Heart right ventricle (tissue), 16 donors: ENCODE measurements at regions of chr16 and their contacts with region 1.

Region 1: DNA sequence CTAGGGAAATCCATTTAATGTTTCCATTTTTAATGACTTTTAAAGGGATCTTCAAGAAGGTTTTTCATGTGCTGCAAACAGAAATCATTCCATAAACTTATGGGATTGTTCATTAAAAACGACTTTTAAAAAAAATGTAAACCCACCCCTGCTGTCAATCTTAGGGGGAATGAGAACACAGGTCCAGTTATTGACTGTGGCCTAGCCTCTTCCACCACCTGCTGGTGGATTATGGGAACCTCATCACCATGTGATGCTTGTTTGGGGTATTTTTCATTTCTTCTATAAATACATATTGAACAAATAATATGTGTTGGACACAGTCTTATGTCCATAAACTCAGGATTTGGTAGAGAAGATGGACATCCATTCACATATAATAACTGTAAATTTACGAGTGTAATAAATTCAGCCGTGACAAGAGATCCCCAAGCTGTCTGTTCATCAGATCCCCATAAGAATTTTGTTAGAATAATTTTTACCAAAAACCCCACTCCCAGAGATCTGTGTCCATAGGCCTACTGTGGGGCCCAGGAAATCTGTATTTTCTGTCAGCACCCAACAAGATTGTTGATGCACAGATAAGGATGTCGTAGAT is 42.0 kb upstream of the TMC5 start:
- DNase-seq: peak; percentile 15 to 44
- ATAC-seq: peak in 5 of 8 donors; percentile 58 to 76 (median 66)
- H3K4me3 ChIP-seq: no peak overlapping the region
- H3K27ac ChIP-seq: no peak overlapping the region
- H3K4me1 ChIP-seq: peaks cover 0 to 6% (median 0%) of the 10 kb centered on the region in 9 donors
- H3K27me3 ChIP-seq: peaks cover 0 to 3% (median 0%) of the 10 kb centered on the region in 7 donors
- CTCF ChIP-seq: peak; percentile 74 to 91 (median 85)

Region 2: GRCh38 chr16:18983565-18984424 is 391.9 kb before region 1 on chr16 and contains the start of gene TMC7:
- intact Hi-C with region 1: loop called in 2 of 10 experiments (anchors 10 kb)
- DNase-seq: peak; percentile 83 to 87
- ATAC-seq: peak; percentile 95 to 99 (median 98)
- H3K4me3 ChIP-seq: peak within 1 kb of the TSS; percentile 29 to 80 (median 64)
- H3K27ac ChIP-seq: peak within 1 kb of the TSS; percentile 17 to 85 (median 70)
- H3K4me1 ChIP-seq: peaks cover 0 to 21% (median 8%) of the 10 kb centered on the region in 9 donors
- H3K27me3 ChIP-seq: peaks cover 0 to 28% (median 0%) of the 10 kb centered on the region in 7 donors
- CTCF ChIP-seq: peak; percentile 64 to 93 (median 74)
- total RNA-seq, gene TMC7: 0.76 to 1.7 (median 1.2) TPM

Region 3: GRCh38 chr16:18999045-18999393 is 376.6 kb before region 1 on chr16:
- intact Hi-C with region 1: loop called in 1 of 10 experiments (anchors 10 kb)
- DNase-seq: no peak
- ATAC-seq: no peak
- H3K4me3 ChIP-seq: no peak overlapping the region
- H3K27ac ChIP-seq: no peak overlapping the region
- H3K4me1 ChIP-seq: peaks cover 0 to 8% (median 0%) of the 10 kb centered on the region in 9 donors
- H3K27me3 ChIP-seq: no peaks in the 10 kb centered on the region
- CTCF ChIP-seq: no peak

Region 4: GRCh38 chr16:19086322-19087199 is 289.1 kb before region 1 on chr16:
- intact Hi-C with region 1: loop called (anchors 1 to 5 kb)
- DNase-seq: peak; percentile 79 to 88
- ATAC-seq: peak; percentile 93 to 98 (median 97)
- H3K4me3 ChIP-seq: peak overlapping the region in 9 of 10 donors; percentile 29 to 62 (median 54)
- H3K27ac ChIP-seq: peak overlapping the region in 5 of 10 donors; percentile 12 to 76 (median 28)
- H3K4me1 ChIP-seq: peaks cover 0 to 33% (median 11%) of the 10 kb centered on the region in 9 donors
- H3K27me3 ChIP-seq: peaks cover 0 to 13% (median 0%) of the 10 kb centered on the region in 7 donors
- CTCF ChIP-seq: peak; percentile 99 to 100 (median 100)

Region 5: DNA sequence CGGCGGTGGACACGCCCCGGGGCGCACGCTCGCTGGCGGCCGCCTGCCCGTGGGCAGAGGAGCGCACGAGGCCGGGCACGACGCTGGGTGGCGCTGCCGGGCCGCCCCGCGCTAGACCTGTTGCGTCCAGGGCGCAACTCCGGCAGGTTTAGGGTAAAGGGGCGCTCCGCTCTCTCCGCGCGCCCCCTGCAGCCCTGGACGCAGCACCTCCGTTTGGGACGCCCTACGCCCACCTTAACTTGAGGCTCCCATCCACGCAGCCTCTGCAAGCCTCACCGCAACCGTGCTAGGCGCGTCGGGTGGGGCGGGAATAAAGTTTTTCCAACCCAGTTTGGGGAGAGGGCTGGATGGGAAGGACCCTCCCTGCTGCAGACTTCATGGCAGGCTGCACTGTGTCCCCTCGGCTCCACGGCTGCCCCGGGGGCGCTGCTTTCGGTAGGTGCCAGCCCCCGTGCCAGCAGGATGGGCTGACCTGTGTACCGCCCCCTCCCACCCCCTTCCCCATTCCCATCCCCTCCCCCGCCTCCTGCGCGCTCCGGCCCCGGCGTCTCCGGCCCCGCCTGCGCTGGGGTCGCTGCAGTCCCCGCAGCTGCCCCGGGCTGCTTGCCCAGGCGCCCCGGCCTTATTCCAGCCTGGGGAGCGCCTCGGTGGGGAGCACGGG is 207.8 kb before region 1 on chr16 and contains the start of gene SYT17:
- intact Hi-C with region 1: loop called in 6 of 10 experiments (anchors 2 to 10 kb)
- DNase-seq: peak; percentile 50 to 77
- ATAC-seq: peak; percentile 88 to 93 (median 91)
- H3K4me3 ChIP-seq: peak within 1 kb of the TSS; percentile 45 to 64 (median 58)
- H3K27ac ChIP-seq: peak within 1 kb of the TSS in 5 of 10 donors; percentile 54 to 71 (median 66)
- H3K4me1 ChIP-seq: peaks cover 0 to 24% (median 15%) of the 10 kb centered on the region in 9 donors
- H3K27me3 ChIP-seq: peaks cover 0 to 61% (median 27%) of the 10 kb centered on the region in 7 donors
- CTCF ChIP-seq: peak; percentile 48 to 84 (median 68)
- total RNA-seq, gene SYT17: 0.20 to 1.3 (median 0.69) TPM

Region 6: GRCh38 chr16:19179546-19180490 is 195.8 kb before region 1 on chr16:
- intact Hi-C with region 1: loop called in 2 of 10 experiments (anchors 10 kb)
- DNase-seq: peak; percentile 55 to 70
- ATAC-seq: peak in 7 of 8 donors; percentile 63 to 83 (median 74)
- H3K4me3 ChIP-seq: no peak overlapping the region
- H3K27ac ChIP-seq: no peak overlapping the region
- H3K4me1 ChIP-seq: peaks cover 0 to 20% (median 0%) of the 10 kb centered on the region in 9 donors
- H3K27me3 ChIP-seq: peaks cover 0 to 8% (median 0%) of the 10 kb centered on the region in 7 donors
- CTCF ChIP-seq: peak; percentile 32 to 79 (median 61)

Region 7: DNA sequence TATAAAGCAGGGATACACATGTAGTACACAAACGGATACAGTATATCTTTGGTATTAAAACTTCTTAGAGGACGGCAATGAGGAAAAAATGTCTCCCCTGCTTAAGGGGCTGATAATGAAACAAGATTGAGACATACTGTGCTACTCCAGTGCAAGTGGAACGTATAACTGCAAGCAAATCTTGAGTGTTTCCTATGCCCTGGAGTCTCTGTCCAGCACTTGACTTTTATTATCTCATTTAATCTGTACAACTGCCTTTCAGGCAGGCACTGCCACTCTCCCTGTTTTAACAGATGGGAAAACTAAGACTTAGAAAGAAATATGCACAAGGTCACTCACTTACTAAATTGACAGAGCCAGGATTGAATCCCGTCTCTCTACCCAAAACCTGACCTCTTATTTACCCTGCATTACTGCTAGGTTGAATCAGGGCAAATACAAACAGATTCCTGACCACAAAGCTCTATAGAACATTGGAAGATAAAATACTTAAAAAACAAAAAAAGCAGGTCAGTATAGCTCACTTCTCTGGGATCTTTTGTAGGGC is 70.7 kb after region 1 on chr16:
- intact Hi-C with region 1: no loop called
- DNase-seq: no peak
- ATAC-seq: no peak
- H3K4me3 ChIP-seq: no peak overlapping the region
- H3K27ac ChIP-seq: no peak overlapping the region
- H3K4me1 ChIP-seq: no peaks in the 10 kb centered on the region
- H3K27me3 ChIP-seq: peaks cover 0 to 19% (median 6%) of the 10 kb centered on the region in 7 donors
- CTCF ChIP-seq: no peak

Region 8: DNA sequence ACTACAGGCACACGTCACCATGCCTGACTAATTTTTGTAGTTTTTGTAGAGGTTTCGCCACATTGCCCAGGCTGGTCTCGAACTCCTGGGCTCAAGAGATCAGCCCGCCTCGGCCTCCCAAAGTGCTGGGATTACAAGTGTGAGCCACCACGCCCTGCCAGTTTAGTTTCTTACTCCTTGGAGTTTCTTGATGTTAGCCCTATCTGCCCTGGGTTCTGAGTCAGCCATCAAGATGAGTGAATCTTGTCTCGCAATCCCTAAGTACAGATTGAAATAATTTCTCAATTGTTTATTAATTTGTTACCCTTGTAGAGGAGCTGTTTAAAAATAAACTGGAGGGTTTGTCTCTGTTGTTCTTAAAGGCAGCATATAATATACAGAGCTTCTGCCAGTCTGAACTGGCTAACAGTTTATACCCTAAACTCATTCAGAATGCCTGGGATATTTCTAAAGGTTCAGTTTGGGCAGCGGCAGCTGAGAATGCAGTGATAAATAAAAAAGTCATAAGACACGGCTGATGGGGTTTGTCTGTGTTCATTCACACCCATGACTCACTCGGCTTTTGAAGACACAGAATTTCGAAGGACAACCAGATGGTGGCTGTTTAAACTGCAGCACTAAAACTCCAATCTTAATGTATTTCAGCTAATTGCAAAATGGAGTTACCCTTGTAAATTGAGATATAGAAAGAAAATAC is 469.4 kb after region 1 on chr16:
- intact Hi-C with region 1: no loop called
- DNase-seq: no peak
- ATAC-seq: peak in 1 of 8 donors; percentile 36
- H3K4me3 ChIP-seq: no peak overlapping the region
- H3K27ac ChIP-seq: peak overlapping the region in 8 of 10 donors; percentile 13 to 75 (median 40)
- H3K4me1 ChIP-seq: peaks cover 0 to 37% (median 10%) of the 10 kb centered on the region in 9 donors
- H3K27me3 ChIP-seq: no peaks in the 10 kb centered on the region
- CTCF ChIP-seq: no peak